ENCODE measurements at regions of chr20 and their contacts with region 1.

Region 1: DNA sequence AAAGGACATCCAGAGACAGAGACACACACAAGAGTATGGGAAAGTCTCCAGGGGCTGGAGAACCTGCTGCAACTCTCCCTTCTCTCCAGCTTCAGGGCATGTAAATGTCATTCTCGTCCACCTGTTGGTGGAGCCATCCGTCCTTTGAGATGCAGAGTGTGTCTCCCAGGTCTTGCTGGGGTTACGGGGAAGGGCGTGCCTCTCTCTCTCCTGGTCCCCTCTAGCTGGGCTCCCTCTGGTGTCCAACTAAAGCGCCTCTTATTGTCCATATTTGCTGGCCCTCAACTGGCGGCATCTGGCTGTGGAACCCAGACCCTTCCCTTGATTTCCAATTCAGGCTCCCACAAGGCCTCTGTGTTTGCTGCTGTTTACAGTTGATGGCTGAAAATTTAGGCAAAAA is 244.1 kb downstream of the BMP7 start:
- DNase-seq: peak; percentile 62 to 65
- H3K4me3 ChIP-seq: no peak overlapping the region; a peak in 1 of 8 replicates
- H3K27ac ChIP-seq: no peak overlapping the region
- H3K4me1 ChIP-seq: peaks cover 0 to 8% (median 4%) of the 10 kb centered on the region in 4 experiments; a peak in 6 of 7 replicates
- H3K27me3 ChIP-seq: peaks cover 0 to 2% (median 0%) of the 10 kb centered on the region in 4 experiments; a peak in 1 of 7 replicates
- CTCF ChIP-seq: peak in 2 of 3 experiments; percentile 67 to 85; a peak in 3 of 4 replicates
- EP300 ChIP-seq: no peak
- POLR2A ChIP-seq: no peak
- RAD21 ChIP-seq: peak; percentile 67 to 75

Region 2: DNA sequence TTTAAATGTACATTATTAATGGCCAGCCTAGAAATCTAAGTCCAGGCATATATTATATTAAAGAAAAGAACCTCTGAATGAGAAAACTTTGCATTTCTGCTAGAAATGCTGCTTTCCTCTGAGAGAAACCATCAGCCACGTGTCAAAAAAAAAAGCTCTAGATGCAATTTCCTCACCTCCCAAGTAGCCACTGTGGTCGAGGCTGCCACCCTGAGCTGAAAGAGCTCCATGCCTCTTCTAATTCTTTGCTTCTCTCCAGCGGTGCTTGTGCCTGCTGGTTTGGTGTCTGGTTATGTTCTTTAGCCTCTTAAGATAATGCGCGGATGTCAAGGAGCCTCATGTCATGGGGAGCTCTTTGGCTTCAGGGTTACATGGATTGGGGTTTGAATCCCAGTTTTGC is 77.3 kb before region 1 on chr20:
- CTCF ChIA-PET with region 1: no interaction called
- POLR2A ChIA-PET with region 1: no interaction called
- DNase-seq: no peak
- H3K4me3 ChIP-seq: no peak overlapping the region
- H3K27ac ChIP-seq: no peak overlapping the region
- H3K4me1 ChIP-seq: no peaks in the 10 kb centered on the region; a peak in 1 of 7 replicates
- H3K27me3 ChIP-seq: no peaks in the 10 kb centered on the region; a peak in 1 of 7 replicates
- CTCF ChIP-seq: no peak
- EP300 ChIP-seq: no peak
- POLR2A ChIP-seq: no peak
- RAD21 ChIP-seq: peak; percentile 13 to 35; a peak in 2 of 4 replicates

Region 3: DNA sequence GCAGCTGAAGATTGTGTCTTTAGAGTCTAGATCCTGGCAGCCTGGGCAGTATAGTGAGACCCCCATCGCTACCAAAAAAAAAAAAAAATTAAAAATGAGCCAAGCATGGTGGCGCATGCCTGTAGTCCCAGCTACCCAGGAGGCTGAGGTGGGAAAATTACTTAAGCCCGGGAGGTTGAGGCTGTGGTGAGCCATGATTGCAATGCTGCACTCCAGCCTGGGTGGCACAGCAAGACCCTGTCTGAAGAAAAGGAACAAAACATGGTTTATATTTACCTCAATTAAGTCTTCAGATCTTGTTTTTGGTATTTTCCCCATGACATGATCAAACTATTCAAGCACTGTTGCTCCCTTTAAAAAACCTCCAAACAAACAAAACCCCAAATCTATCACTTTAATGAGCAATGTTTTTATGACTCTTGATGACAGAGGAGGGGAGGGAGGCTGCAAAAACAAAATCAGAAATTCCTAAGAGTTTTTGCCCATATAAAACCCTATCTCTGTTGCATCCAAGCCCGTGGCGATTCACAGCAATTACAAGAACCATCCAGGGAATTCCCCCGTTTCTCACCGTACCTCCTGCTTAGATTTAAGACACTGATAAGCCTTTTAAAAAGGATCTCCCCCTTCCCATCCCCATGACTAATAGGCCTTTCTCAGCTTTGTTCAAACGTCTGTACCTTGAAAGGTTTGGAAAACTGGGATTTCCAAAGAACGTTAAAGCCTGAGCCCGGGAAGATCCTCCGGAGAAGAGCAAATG is 15.7 kb before region 1 on chr20:
- CTCF ChIA-PET with region 1: interaction called, 11 read pairs
- POLR2A ChIA-PET with region 1: no interaction called
- DNase-seq: no peak
- H3K4me3 ChIP-seq: no peak overlapping the region
- H3K27ac ChIP-seq: no peak overlapping the region
- H3K4me1 ChIP-seq: peaks cover 0 to 8% (median 0%) of the 10 kb centered on the region in 4 experiments; a peak in 1 of 7 replicates
- H3K27me3 ChIP-seq: no peaks in the 10 kb centered on the region
- CTCF ChIP-seq: no peak
- EP300 ChIP-seq: no peak
- POLR2A ChIP-seq: no peak
- RAD21 ChIP-seq: no peak

Region 4: DNA sequence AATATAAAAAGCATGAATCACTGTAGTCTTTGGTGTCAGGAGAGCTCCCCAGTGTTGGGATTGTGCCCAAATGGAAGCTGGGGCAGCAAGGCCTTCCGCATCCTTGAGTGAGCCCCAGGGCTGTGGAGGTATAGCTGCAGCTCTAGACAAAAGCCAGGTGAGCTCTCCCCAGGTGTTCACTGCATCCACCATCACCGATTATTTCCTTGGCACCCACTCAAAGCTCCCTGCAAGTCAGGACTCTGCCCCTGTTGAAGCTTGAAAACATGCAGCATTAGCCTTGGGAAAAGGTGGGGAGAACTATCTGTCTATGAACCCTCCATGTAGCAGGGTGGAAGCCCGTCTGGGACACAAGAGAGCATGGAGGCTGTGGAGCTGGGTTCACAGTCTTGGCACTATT is 15.4 kb after region 1 on chr20:
- CTCF ChIA-PET with region 1: interaction called, 10 read pairs
- POLR2A ChIA-PET with region 1: interaction called, 3 read pairs
- DNase-seq: no peak
- H3K4me3 ChIP-seq: no peak overlapping the region
- H3K27ac ChIP-seq: no peak overlapping the region
- H3K4me1 ChIP-seq: peaks cover 0 to 2% (median 0%) of the 10 kb centered on the region in 4 experiments; a peak in 1 of 7 replicates
- H3K27me3 ChIP-seq: peaks cover 0 to 3% (median 0%) of the 10 kb centered on the region in 4 experiments; a peak in 1 of 7 replicates
- CTCF ChIP-seq: no peak
- EP300 ChIP-seq: no peak
- POLR2A ChIP-seq: no peak
- RAD21 ChIP-seq: no peak

Region 5: GRCh38 chr20:57080788-57081187 is 58.5 kb after region 1 on chr20:
- CTCF ChIA-PET with region 1: no interaction called
- POLR2A ChIA-PET with region 1: no interaction called
- DNase-seq: no peak
- H3K4me3 ChIP-seq: no peak overlapping the region
- H3K27ac ChIP-seq: no peak overlapping the region
- H3K4me1 ChIP-seq: no peaks in the 10 kb centered on the region
- H3K27me3 ChIP-seq: no peaks in the 10 kb centered on the region
- CTCF ChIP-seq: peak in 2 of 3 experiments; percentile 32 to 40; a peak in 1 of 4 replicates
- EP300 ChIP-seq: no peak
- POLR2A ChIP-seq: no peak
- RAD21 ChIP-seq: peak; percentile 51 to 62